Gastrocnemius medialis (tissue), 4 donors: ENCODE measurements at regions of chr16 and their contacts with region 1.

Region 1: GRCh38 chr16:25977121-25977520 is 285.4 kb downstream of the HS3ST4 start:
- DNase-seq: no peak
- ATAC-seq: no peak
- H3K4me3 ChIP-seq: no peak overlapping the region
- H3K27ac ChIP-seq: no peak overlapping the region
- H3K4me1 ChIP-seq: no peaks in the 10 kb centered on the region
- H3K27me3 ChIP-seq: no peaks in the 10 kb centered on the region
- CTCF ChIP-seq: no peak
- POLR2A ChIP-seq: no peak

Region 2: GRCh38 chr16:25931473-25932035 is 45.6 kb before region 1 on chr16:
- in situ Hi-C with region 1: no loop called
- intact Hi-C with region 1: loop called (anchors 2 kb)
- DNase-seq: no peak
- ATAC-seq: no peak
- H3K4me3 ChIP-seq: no peak overlapping the region
- H3K27ac ChIP-seq: no peak overlapping the region
- H3K4me1 ChIP-seq: no peaks in the 10 kb centered on the region
- H3K27me3 ChIP-seq: no peaks in the 10 kb centered on the region
- CTCF ChIP-seq: no peak
- POLR2A ChIP-seq: no peak

Region 3: DNA sequence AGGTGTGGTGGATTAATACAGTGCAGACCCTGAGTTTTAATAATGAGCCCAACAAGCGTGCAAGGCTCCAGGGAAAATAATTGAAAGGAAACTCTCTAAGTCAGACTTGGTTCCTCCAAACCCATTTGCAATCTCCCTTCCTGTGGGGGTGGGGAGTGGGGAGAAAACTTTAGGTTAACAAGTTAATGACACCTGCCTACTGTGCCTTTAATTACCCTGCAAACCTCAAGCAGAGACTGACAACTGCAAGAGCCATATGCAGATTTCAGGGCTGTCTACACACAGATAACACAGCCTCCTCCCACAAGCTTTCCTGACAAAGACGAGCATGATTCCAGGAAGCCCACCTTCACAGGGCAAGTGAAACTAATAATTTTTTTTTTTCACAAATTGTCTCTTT is 73.9 kb after region 1 on chr16:
- in situ Hi-C with region 1: no loop called
- intact Hi-C with region 1: no loop called
- DNase-seq: no peak
- ATAC-seq: no peak
- H3K4me3 ChIP-seq: no peak overlapping the region
- H3K27ac ChIP-seq: no peak overlapping the region
- H3K4me1 ChIP-seq: no peaks in the 10 kb centered on the region
- H3K27me3 ChIP-seq: no peaks in the 10 kb centered on the region
- CTCF ChIP-seq: no peak
- POLR2A ChIP-seq: no peak